Panc1 (cell line): ENCODE measurements at regions of chrX and their contacts with region 1.

Region 1: GRCh38 chrX:13750204-13750603 is 15.7 kb downstream of the OFD1 start:
- DNase-seq: no peak
- ATAC-seq: peak; percentile 58; the same call in 1 of the 2 replicates
- H3K4me3 ChIP-seq: no peak overlapping the region
- H3K27ac ChIP-seq: no peak overlapping the region
- H3K4me1 ChIP-seq: no peaks in the 10 kb centered on the region
- H3K27me3 ChIP-seq: no peaks in the 10 kb centered on the region
- CTCF ChIP-seq: peak; percentile 63

Region 2: DNA sequence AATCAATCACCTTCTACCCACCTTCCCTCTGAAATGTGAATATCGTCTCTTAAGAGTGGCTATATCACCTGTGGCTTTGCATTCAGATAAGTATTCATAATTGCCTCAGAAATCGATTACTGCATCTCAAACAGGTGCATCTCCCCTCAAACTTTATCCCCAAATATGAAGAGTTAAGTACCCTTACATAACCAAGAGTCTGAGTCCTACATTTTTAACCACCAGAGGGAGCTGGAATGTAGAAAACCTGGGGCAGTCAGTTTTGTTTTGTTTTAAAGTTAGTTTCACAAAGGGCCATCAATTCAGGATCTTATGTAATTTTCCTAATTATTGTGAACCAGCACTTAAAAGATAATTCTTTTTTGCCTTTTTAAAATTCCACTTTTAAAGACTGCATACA is 91.6 kb before region 1 on chrX:
- CTCF ChIA-PET with region 1: no interaction called
- POLR2A ChIA-PET with region 1: no interaction called
- in situ Hi-C with region 1: no loop called
- intact Hi-C with region 1: loop called (anchors 5 kb)
- DNase-seq: no peak
- ATAC-seq: no peak
- H3K4me3 ChIP-seq: no peak overlapping the region
- H3K27ac ChIP-seq: no peak overlapping the region
- H3K4me1 ChIP-seq: no peaks in the 10 kb centered on the region
- H3K27me3 ChIP-seq: no peaks in the 10 kb centered on the region
- CTCF ChIP-seq: peak; percentile 60; the same call in 1 of the 2 replicates

Region 3: GRCh38 chrX:13699183-13699826 is 50.9 kb before region 1 on chrX:
- CTCF ChIA-PET with region 1: no interaction called
- POLR2A ChIA-PET with region 1: no interaction called
- in situ Hi-C with region 1: no loop called
- intact Hi-C with region 1: no loop called
- DNase-seq: no peak
- ATAC-seq: no peak
- H3K4me3 ChIP-seq: no peak overlapping the region
- H3K27ac ChIP-seq: no peak overlapping the region
- H3K4me1 ChIP-seq: no peaks in the 10 kb centered on the region
- H3K27me3 ChIP-seq: no peaks in the 10 kb centered on the region
- CTCF ChIP-seq: no peak